ENCODE measurements at regions of chr11 and their contacts with region 1.

Region 1: GRCh38 chr11:75204685-75205563 is 35.6 kb upstream of the TPBGL start:
- DNase-seq: peak; percentile 89 to 90
- ATAC-seq: peak; percentile 93 to 97 (median 96)
- H3K4me3 ChIP-seq: no peak overlapping the region
- H3K27ac ChIP-seq: peak overlapping the region in 2 of 10 donors; percentile 9 to 48
- H3K4me1 ChIP-seq: peaks cover 0 to 12% (median 3%) of the 10 kb centered on the region in 9 donors
- H3K27me3 ChIP-seq: peaks cover 0 to 3% (median 0%) of the 10 kb centered on the region in 7 donors
- CTCF ChIP-seq: peak; percentile 84 to 95 (median 93)

Region 2: DNA sequence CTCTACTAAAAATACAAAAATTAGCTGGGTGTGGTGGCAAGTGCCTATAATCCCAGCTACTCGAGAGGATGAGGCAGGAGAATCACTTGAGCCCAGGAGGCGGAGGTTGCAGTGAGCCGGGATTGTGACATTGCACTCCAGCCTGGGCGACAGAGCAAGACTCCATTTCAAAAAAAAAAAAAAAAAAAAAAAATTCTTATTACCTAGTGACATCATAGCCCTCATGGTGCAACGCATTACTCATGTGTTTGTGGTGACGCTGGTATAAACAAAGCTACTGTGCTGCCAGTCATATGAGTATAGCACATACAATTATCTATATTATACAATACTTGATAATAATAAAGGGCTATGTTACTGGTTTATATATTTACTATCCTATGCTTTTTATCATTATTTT is 149.5 kb before region 1 on chr11:
- intact Hi-C with region 1: no loop called
- DNase-seq: no peak
- ATAC-seq: no peak
- H3K4me3 ChIP-seq: no peak overlapping the region
- H3K27ac ChIP-seq: no peak overlapping the region
- H3K4me1 ChIP-seq: no peaks in the 10 kb centered on the region
- H3K27me3 ChIP-seq: peaks cover 0 to 4% (median 0%) of the 10 kb centered on the region in 7 donors
- CTCF ChIP-seq: no peak

Region 3: DNA sequence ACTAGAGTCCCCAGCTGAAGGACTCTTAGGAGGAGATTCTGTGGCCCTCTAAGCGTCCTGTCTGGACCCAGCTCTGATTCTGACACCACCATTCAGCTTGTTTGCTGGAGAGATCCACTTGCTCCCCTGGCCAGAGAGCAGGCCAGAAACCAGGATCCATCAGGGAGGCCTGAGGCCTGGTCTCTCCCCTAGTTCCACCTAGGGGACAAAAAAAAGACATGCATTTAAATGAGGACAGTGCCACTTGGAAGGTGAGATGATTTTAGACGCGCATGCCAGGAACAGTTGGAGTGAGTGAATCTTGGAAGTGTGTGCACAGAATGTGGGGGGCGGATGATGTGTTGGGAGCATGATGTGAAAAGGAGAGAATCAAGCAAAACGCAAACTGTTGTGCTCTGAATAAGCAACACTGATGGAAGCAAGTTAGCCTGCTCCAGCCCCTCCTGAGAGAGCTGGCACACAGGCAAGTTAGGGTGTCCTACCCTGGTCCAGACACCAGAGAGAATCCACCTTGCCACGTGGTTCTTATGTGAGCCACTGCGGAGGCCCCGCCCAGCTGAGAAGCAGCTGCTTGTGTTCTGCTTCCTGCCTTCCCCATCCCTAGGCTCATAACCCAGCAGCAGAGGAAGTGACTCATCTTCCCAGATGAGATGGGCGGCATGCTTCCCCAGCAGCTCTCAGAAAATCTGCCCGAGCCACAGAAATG is 62.1 kb before region 1 on chr11:
- intact Hi-C with region 1: loop called (anchors 1 to 2 kb)
- DNase-seq: peak; percentile 68 to 76
- ATAC-seq: peak; percentile 76 to 93 (median 89)
- H3K4me3 ChIP-seq: no peak overlapping the region
- H3K27ac ChIP-seq: peak overlapping the region in 5 of 10 donors; percentile 1 to 71 (median 56)
- H3K4me1 ChIP-seq: peaks cover 3 to 60% (median 25%) of the 10 kb centered on the region in 9 donors
- H3K27me3 ChIP-seq: peaks cover 0 to 19% (median 4%) of the 10 kb centered on the region in 7 donors
- CTCF ChIP-seq: no peak

Measured in heart right ventricle (tissue), 16 donors.